ENCODE measurements at regions of chr16 and their contacts with region 1.

Region 1: DNA sequence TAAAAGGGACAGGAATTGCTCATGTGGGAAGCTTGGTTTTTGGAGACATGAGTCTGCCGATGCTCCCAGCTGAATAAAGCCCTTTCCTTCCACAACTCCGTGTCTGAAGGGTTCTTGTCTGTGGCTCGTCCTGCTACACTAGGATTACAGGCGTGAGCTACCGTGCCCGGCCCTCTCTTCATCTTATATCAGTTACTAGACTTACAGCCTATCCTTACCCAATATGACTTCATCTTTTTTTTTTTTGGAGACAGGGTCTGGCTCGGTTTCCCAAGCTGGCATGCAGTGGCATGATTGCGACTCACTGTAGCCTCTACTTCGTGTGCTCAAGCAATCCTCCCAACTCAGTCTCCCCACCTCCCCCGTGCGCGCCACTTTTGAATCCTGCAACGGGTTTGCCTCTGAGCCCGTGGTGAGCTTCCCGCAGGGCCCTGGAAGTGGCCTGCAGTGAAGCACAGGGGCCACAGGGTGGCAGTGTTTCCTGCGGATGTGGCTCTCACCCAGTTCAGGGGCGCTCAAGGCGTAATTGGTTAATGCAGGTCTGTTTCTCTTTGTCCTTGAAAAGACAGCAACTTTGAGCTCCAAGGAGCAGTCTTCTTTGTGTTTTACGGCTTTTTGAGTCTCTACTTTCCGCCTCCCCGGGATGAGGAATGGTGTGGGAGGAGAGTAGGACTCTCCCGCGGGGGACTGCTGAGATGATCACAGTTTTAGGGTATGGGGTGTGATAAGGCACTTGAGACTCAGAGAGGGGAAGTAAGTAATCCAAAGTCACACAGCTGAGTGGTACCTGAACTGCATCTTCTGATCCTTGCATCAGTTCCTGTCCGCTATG is 22.7 kb upstream of the GPRC5B start:
- DNase-seq: peak; percentile 73
- H3K4me3 Mint-ChIP-seq: no peak overlapping the region
- H3K27ac Mint-ChIP-seq: no peak overlapping the region
- H3K4me1 Mint-ChIP-seq: no peaks in the 10 kb centered on the region
- H3K27me3 Mint-ChIP-seq: peaks cover 14% of the 10 kb centered on the region
- CTCF ChIP-seq: peak; percentile 96

Region 2: GRCh38 chr16:19607616-19608280 is 299.6 kb before region 1 on chr16:
- CTCF ChIA-PET with region 1: interaction called, 17 read pairs
- POLR2A ChIA-PET with region 1: no interaction called
- intact Hi-C with region 1: no loop called
- DNase-seq: no peak
- H3K4me3 Mint-ChIP-seq: no peak overlapping the region
- H3K27ac Mint-ChIP-seq: no peak overlapping the region
- H3K4me1 Mint-ChIP-seq: no peaks in the 10 kb centered on the region
- H3K27me3 Mint-ChIP-seq: no peaks in the 10 kb centered on the region
- CTCF ChIP-seq: no peak

Region 3: GRCh38 chr16:19935699-19936098 is 28.3 kb after region 1 on chr16:
- CTCF ChIA-PET with region 1: interaction called, 10 read pairs
- POLR2A ChIA-PET with region 1: no interaction called
- intact Hi-C with region 1: no loop called
- DNase-seq: no peak
- H3K4me3 Mint-ChIP-seq: no peak overlapping the region
- H3K27ac Mint-ChIP-seq: no peak overlapping the region
- H3K4me1 Mint-ChIP-seq: no peaks in the 10 kb centered on the region
- H3K27me3 Mint-ChIP-seq: peaks cover 12% of the 10 kb centered on the region
- CTCF ChIP-seq: no peak

Region 4: DNA sequence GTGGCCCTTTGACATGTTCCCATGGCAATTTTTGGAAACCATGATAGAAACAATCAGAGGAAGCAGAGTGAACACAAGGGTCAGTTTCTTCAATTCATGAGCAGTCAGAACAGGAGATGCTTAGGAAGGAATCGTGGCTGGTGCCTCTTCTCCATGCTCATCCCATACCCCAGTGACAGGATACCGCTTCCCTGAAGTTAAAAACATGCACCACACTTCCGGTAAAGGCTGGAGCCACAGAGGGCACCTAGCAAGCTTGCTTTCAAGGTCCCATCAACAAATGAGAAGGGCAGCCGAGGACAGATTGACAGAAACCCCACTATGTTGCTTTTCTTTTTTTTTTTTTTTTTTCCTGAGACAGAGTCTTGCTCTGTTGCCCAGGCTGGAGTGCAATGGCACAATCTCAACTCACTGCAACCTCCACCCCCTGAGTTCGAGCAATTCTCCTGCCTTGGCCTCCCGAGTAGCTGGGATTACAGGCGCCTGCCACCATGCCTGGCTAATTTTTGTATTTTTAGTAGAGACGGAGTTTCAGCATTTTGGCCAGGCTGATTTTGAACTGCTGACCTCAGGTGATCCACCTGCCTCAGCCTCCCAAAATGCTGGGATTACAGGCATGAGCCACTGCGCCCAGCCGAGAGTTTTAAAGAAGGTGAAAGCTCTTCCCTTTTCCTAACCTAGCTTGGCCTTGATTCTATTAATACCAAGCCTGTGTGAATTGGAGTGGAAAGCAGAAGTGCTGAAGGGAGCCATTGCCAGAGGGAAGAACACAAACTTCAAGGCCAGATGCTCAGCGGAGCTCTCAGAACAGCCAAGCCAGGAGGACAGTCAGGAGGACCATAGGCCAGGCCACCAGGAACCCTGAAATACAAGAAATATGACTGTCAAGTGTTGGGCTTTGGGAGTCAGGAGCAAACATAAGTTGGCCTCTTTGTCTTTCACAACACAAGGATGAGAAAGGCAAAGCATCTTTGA is 403.3 kb after region 1 on chr16:
- CTCF ChIA-PET with region 1: interaction called, 456 read pairs
- POLR2A ChIA-PET with region 1: no interaction called
- intact Hi-C with region 1: no loop called
- DNase-seq: no peak
- H3K4me3 Mint-ChIP-seq: no peak overlapping the region
- H3K27ac Mint-ChIP-seq: no peak overlapping the region
- H3K4me1 Mint-ChIP-seq: no peaks in the 10 kb centered on the region
- H3K27me3 Mint-ChIP-seq: peaks cover 6% of the 10 kb centered on the region
- CTCF ChIP-seq: no peak

Region 5: DNA sequence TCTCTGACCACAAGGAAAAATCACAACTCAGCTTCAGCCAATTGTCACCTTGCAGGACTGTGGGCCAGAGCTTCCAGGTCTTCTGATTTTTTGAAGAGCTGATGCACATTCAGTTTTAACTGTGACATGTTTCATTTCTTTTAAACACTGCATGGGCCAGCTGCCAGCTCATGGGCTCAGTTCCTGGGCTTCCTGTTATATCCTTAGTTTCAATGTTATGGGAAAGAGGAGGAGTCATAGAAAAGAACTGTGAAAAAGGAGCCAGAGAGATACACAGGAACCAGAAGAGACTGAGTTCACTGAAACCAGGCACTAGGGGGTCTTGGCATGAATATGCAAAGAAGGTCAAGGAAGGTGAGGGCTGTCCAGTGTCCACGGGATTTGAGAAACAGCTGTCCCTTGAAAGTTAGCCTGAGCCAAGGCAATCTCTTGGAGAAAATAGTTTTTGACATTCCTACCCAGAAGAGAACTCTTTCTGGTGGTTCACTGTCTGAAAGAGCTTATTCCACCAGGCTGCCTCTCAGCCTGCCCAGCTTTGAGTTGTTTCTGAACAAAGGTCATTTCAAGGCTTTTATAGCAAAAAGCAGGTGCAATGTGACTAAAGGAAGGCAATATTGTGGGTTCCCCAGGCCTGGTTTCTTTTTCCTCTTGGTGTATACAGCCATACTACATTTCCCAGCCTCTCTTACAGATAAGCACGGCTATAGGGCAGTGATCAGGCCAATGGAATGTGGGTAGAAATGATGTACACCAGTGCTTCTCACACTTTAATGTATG is 486.6 kb after region 1 on chr16:
- CTCF ChIA-PET with region 1: interaction called, 537 read pairs
- POLR2A ChIA-PET with region 1: no interaction called
- intact Hi-C with region 1: no loop called
- DNase-seq: no peak
- H3K4me3 Mint-ChIP-seq: no peak overlapping the region
- H3K27ac Mint-ChIP-seq: no peak overlapping the region
- H3K4me1 Mint-ChIP-seq: peaks cover 14% of the 10 kb centered on the region
- H3K27me3 Mint-ChIP-seq: no peaks in the 10 kb centered on the region
- CTCF ChIP-seq: no peak

Region 6: GRCh38 chr16:20865420-20866131 is 958.2 kb after region 1 on chr16:
- CTCF ChIA-PET with region 1: no interaction called
- POLR2A ChIA-PET with region 1: no interaction called
- intact Hi-C with region 1: no loop called
- DNase-seq: peak; percentile 73
- H3K4me3 Mint-ChIP-seq: peak overlapping the region; percentile 64
- H3K27ac Mint-ChIP-seq: peak overlapping the region; percentile 99
- H3K4me1 Mint-ChIP-seq: peaks cover 63% of the 10 kb centered on the region
- H3K27me3 Mint-ChIP-seq: no peaks in the 10 kb centered on the region
- CTCF ChIP-seq: no peak

Measured in MCF 10A (cell line).